ENCODE measurements at regions of chrX and their contacts with region 1.

Region 1: GRCh38 chrX:17046478-17047097 is 100.1 kb downstream of the REPS2 start:
- DNase-seq: peak; percentile 21
- ATAC-seq: peak; percentile 97
- H3K4me3 ChIP-seq: no peak overlapping the region
- H3K27ac ChIP-seq: no peak overlapping the region
- H3K4me1 ChIP-seq: no peaks in the 10 kb centered on the region
- H3K27me3 ChIP-seq: no peaks in the 10 kb centered on the region; a peak in 1 of 4 replicates
- CTCF ChIP-seq: peak; percentile 83 to 85 (median 84)
- EP300 ChIP-seq: no peak
- POLR2A ChIP-seq: no peak
- RAD21 ChIP-seq: peak; percentile 88

Region 2: DNA sequence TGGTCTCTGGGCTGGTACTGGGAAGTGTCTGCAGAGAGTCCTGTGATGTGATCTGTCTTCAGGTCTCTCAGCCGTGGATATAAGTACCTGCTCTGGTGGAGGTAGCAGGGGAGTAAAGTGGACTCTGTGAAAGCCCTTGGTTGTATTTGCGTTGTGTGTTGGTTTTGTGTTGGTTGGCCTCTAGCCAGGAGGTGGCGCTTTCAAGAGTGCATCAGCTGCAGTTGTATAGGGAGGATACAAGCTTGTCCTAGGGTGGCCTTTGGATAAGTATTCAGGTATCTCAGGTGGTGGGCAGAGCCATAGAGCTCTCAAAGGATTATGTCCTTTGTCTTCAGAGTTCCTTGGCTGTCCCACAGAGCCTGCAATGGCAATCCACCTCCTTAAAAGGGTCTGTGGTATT is 767.7 kb before region 1 on chrX:
- CTCF ChIA-PET with region 1: no interaction called
- POLR2A ChIA-PET with region 1: no interaction called
- RAD21 ChIA-PET with region 1: no interaction called
- SMC1A ChIA-PET with region 1: no interaction called
- in situ Hi-C with region 1: no loop called
- intact Hi-C with region 1: no loop called
- DNase-seq: no peak
- ATAC-seq: no peak
- H3K4me3 ChIP-seq: no peak overlapping the region
- H3K27ac ChIP-seq: no peak overlapping the region
- H3K4me1 ChIP-seq: no peaks in the 10 kb centered on the region
- H3K27me3 ChIP-seq: no peaks in the 10 kb centered on the region
- CTCF ChIP-seq: no peak
- EP300 ChIP-seq: no peak
- POLR2A ChIP-seq: no peak
- RAD21 ChIP-seq: no peak

Region 3: GRCh38 chrX:16826207-16826606 is 220.4 kb before region 1 on chrX:
- CTCF ChIA-PET with region 1: interaction called, 78 read pairs
- POLR2A ChIA-PET with region 1: no interaction called
- RAD21 ChIA-PET with region 1: interaction called, 24 read pairs
- SMC1A ChIA-PET with region 1: interaction called, 52 read pairs
- in situ Hi-C with region 1: no loop called
- intact Hi-C with region 1: loop called (anchors 1 kb)
- DNase-seq: no peak
- ATAC-seq: peak; percentile 76
- H3K4me3 ChIP-seq: no peak overlapping the region
- H3K27ac ChIP-seq: no peak overlapping the region
- H3K4me1 ChIP-seq: no peaks in the 10 kb centered on the region
- H3K27me3 ChIP-seq: no peaks in the 10 kb centered on the region
- CTCF ChIP-seq: peak; percentile 37 to 68 (median 60); a peak in 5 of 6 replicates
- EP300 ChIP-seq: no peak
- POLR2A ChIP-seq: no peak
- RAD21 ChIP-seq: peak; percentile 65

Region 4: DNA sequence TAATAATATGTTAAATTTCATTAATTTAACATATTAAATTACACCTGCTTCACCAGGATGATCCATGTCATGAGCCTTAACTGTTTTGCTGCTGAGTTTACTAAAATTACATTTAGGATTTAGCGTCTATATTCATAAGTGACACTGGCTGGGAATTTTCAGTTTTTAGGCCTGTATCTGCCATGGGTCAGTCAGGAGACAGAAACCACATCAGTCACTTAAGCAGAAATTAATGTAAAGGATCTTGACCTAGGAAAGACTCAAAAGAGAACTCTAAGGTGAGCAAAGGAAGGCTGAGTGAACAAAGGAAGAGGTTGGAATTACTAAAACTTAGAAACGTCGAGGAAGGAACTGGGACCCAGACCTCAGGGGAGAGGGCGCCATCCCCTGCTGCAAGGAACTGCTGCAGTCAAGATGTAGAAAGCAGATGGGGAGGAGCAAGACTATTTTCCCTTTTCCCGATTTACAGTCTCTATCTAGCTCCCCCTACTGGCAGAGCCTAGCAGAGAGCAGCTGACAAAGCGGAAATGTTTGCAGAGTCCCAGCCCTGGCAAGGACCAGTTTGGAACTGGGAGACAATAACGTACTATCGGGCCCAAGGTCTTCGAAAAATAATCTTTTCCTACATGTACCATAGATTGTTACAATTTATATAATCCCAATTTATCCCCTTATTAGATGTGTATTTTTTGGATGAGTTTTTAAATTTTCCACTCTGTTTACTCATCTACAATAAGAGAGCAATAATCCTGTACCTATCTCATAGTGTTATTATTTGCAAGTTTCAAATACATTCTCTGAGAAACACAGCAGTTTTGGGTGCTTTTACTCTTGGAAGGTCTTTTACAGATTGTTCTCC is 153.9 kb before region 1 on chrX:
- CTCF ChIA-PET with region 1: interaction called, 205 read pairs
- POLR2A ChIA-PET with region 1: no interaction called
- RAD21 ChIA-PET with region 1: interaction called, 27 read pairs
- SMC1A ChIA-PET with region 1: interaction called, 109 read pairs
- in situ Hi-C with region 1: loop called (anchors 5 kb)
- intact Hi-C with region 1: no loop called
- DNase-seq: peak; percentile 25
- ATAC-seq: peak; percentile 95
- H3K4me3 ChIP-seq: no peak overlapping the region
- H3K27ac ChIP-seq: no peak overlapping the region
- H3K4me1 ChIP-seq: peaks cover 3% of the 10 kb centered on the region; the same call in 1 of the 2 replicates
- H3K27me3 ChIP-seq: 0 out of 4 replicates have a peak, but pooled peaks cover 0 to 2% of the 10 kb centered on the region in 2 experiments
- CTCF ChIP-seq: peak; percentile 85 to 98 (median 91)
- EP300 ChIP-seq: no peak
- POLR2A ChIP-seq: no peak
- RAD21 ChIP-seq: peak; percentile 61

Region 5: DNA sequence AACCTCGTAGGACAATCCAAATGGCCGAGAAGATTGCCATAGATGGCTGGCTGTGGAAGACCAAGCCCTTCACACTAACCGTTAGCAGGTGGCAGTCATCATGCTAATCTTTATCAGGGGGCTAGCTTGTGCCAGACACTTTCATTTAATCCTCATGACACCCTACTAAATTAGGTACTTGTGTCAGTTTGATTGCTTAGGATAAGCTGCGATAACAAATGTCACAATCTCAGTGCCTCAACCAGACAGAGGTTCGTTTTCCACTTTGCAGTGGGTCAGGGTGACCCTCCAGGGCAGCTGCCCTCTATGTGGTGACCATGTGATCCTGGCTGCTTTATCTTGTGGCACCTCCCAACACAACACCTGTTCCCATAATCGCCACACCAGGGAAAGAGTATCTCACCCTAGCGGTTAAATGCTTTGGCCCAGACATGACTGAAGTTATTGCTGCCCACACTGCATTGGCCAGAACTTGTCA is 39.3 kb before region 1 on chrX:
- CTCF ChIA-PET with region 1: interaction called, 96 read pairs
- POLR2A ChIA-PET with region 1: interaction called, 4 read pairs
- RAD21 ChIA-PET with region 1: interaction called, 30 read pairs
- SMC1A ChIA-PET with region 1: interaction called, 67 read pairs
- in situ Hi-C with region 1: no loop called
- intact Hi-C with region 1: loop called (anchors 1 kb)
- DNase-seq: no peak
- ATAC-seq: peak; percentile 91
- H3K4me3 ChIP-seq: no peak overlapping the region
- H3K27ac ChIP-seq: no peak overlapping the region
- H3K4me1 ChIP-seq: no peaks in the 10 kb centered on the region
- H3K27me3 ChIP-seq: peaks cover 0 to 3% of the 10 kb centered on the region in 2 experiments; a peak in 1 of 4 replicates
- CTCF ChIP-seq: peak; percentile 36 to 48 (median 47); a peak in 4 of 6 replicates
- EP300 ChIP-seq: no peak
- POLR2A ChIP-seq: no peak
- RAD21 ChIP-seq: peak; percentile 40; the same call in 1 of the 2 replicates

Region 6: DNA sequence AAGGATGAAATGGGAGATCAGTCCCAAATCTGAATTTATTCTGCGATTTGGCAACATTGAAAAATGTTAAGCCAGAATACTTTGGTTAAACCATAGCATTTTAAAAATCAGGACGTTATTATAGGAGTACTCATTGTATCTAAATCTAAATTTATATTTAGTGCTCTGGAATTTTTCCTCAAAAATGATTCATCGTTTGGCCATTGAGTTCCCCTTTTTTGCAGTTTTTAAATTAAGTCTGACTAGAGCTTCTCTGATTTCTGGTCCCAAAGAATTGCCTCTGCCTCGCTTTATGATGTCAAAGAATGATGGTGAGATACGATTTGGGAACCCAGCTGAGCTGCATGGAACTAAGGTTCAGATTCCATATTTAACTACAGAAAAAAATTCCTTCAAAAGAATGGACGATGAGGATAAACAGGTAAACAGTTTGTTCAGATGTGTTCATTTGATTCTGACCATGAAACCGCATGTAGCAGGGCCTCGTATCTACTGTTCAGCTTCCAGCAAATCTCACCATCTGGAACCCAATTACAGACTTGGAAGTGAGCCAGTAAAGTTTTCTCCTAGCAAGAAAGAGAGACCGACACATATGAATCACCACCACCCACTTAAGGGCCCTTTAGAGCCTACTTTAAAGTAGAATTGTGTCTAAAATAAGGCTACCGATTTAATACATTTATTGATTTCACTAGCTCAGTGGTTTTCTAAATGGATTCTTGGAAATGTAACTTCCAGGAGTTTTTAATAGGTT is 24.6 kb before region 1 on chrX:
- CTCF ChIA-PET with region 1: interaction called, 32 read pairs
- POLR2A ChIA-PET with region 1: no interaction called
- RAD21 ChIA-PET with region 1: interaction called, 4 read pairs
- SMC1A ChIA-PET with region 1: interaction called, 11 read pairs
- in situ Hi-C with region 1: no loop called
- intact Hi-C with region 1: no loop called
- DNase-seq: no peak
- ATAC-seq: no peak
- H3K4me3 ChIP-seq: no peak overlapping the region
- H3K27ac ChIP-seq: no peak overlapping the region
- H3K4me1 ChIP-seq: no peaks in the 10 kb centered on the region; the same call in 1 of the 2 replicates
- H3K27me3 ChIP-seq: no peaks in the 10 kb centered on the region
- CTCF ChIP-seq: no peak
- EP300 ChIP-seq: no peak
- POLR2A ChIP-seq: no peak
- RAD21 ChIP-seq: no peak

Region 7: DNA sequence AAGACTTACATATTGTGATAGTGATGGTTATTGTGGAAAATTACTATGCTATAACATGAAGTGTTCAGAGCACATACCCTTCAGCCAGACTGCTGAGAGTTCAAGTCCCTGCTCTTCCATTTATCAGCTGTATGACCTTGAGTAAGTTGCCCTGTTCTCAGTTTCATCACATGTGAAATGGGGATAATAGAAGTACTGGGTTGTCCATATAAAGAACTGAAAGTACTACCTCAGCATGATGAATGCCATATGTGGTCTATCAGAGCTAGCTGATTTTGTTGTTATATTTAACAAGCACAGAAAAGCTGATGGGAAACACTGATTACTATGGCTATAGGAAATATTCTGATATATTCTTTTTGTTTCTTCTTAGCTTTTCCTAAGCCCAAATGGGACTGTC is 15.5 kb after region 1 on chrX:
- CTCF ChIA-PET with region 1: interaction called, 13 read pairs
- POLR2A ChIA-PET with region 1: no interaction called
- RAD21 ChIA-PET with region 1: interaction called, 3 read pairs
- SMC1A ChIA-PET with region 1: interaction called, 20 read pairs
- in situ Hi-C with region 1: no loop called
- intact Hi-C with region 1: no loop called
- DNase-seq: no peak
- ATAC-seq: peak; percentile 77
- H3K4me3 ChIP-seq: no peak overlapping the region
- H3K27ac ChIP-seq: no peak overlapping the region
- H3K4me1 ChIP-seq: no peaks in the 10 kb centered on the region
- H3K27me3 ChIP-seq: no peaks in the 10 kb centered on the region; a peak in 1 of 4 replicates
- CTCF ChIP-seq: no peak
- EP300 ChIP-seq: no peak
- POLR2A ChIP-seq: no peak
- RAD21 ChIP-seq: no peak